ENCODE measurements at regions of chr11 and their contacts with region 1.

Region 1: DNA sequence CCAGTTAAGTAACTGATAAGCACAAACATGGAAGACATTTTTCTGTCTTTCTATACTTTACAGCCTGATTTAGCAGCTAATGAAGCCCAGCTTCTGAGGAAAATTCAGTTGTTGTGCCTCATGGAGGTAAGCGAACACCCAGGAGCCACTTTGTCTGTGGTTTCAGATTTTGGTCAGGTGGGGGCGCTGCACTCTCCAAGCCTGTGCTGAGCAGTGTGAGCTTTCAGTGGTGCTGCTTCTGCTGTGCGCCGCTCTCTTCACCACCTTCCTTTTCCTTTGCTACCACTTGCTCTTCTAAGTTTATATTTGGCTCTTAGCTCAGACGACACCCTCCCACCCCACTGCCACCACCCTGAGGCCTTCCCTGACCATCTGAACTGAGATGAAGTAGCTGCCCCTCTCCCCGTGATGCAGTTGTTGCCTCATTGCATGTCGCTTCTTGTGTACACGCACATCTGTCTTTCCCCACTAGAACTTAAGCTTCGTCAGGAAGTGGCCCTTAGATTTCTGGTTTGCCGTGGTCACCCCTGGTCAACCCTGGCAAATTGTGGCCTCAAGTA is 14.0 kb downstream of the PSMD13 start:
- DNase-seq: peak; percentile 89
- ATAC-seq: peak; percentile 98
- H3K4me3 Mint-ChIP-seq: no peak overlapping the region
- H3K27ac Mint-ChIP-seq: peak overlapping the region; percentile 93; the same call in 1 of the 2 replicates
- H3K4me1 Mint-ChIP-seq: peaks cover 6% of the 10 kb centered on the region; the same call in 1 of the 2 replicates
- H3K27me3 Mint-ChIP-seq: no peaks in the 10 kb centered on the region
- CTCF ChIP-seq: peak; percentile 92

Region 2: GRCh38 chr11:213178-213577 is 37.6 kb before region 1 on chr11:
- CTCF ChIA-PET with region 1: interaction called, 23 read pairs
- POLR2A ChIA-PET with region 1: no interaction called
- DNase-seq: no peak
- ATAC-seq: no peak
- H3K4me3 Mint-ChIP-seq: no peak overlapping the region
- H3K27ac Mint-ChIP-seq: no peak overlapping the region
- H3K4me1 Mint-ChIP-seq: 0 out of 2 replicates have a peak, but pooled peaks cover 4% of the 10 kb centered on the region
- H3K27me3 Mint-ChIP-seq: no peaks in the 10 kb centered on the region
- CTCF ChIP-seq: no peak

Region 3: DNA sequence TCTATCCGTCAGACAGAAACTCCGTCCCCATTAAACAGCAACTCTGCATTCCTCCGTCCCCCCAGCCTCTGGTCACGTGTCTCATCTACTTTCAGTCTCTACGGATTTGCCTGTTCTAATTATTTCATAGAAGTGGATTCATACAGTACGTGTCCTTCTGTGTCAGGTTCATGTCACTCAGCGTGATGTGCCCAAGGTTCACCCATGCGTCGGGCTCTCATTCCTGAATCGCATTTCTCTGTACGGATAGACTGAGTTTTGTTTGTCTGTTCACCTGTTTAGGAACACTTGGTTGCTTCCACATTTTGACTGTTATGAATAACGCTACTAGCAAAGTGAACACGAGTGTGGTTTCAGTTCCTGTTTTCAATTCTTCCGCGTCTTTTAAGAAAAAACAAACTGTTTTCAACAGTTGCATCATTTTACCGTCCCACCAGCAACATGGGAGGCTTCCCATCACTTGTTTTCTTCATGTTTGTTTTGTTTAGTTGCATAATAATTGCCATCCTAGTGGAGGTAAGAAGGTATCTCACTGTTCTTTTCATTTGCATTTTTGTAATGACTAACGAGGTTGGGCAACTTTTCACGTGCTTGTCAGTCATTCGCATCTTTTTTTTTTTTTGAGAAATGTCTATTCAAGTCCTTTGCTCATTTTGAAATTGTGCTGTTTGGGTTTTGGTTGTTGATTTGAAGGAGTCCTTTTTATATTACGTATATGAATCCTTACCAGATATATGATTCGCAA is 18.5 kb after region 1 on chr11:
- CTCF ChIA-PET with region 1: interaction called, 20 read pairs
- POLR2A ChIA-PET with region 1: interaction called, 4 read pairs
- DNase-seq: no peak
- ATAC-seq: no peak
- H3K4me3 Mint-ChIP-seq: peak overlapping the region; percentile 46
- H3K27ac Mint-ChIP-seq: peak overlapping the region; percentile 71
- H3K4me1 Mint-ChIP-seq: peaks cover 28% of the 10 kb centered on the region
- H3K27me3 Mint-ChIP-seq: no peaks in the 10 kb centered on the region; the same call in 1 of the 2 replicates
- CTCF ChIP-seq: no peak

Region 4: DNA sequence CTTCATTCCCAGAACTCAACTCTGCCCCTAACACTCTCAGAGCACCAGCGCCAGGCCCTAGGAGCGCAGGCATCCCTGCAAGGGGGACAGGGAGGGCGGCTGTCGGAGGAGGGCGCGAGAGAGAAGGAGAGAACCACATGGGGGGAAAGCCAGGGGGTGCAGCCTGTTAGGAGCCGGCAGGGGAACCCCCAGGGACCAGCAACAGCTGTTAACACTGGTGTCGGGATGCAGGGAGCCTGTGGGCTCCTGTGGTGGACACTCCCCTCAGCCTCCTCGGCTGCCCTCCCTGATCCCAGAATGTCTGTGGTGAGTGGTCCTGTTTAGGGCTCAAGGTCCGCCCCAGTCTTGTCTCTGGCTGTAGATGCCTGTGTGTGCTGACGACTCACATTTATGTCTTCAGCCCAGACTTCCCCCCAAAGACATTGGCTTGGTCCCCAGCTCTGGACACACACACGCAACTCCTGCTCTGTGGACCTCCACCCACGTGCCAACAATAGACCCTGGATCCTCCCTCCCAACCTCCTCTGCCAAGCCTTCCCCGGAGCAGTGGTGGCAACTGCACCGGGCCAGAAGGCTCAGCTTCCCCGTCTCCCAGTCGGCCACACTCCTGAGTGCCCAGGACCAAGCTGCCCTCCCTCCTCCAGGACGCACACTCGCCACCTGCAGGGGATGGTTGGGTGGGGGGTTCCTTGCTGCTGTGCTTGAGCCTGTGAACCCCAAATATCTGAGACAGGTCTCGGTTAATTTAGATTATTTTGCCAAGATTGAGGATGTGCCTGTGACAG is 49.3 kb after region 1 on chr11:
- CTCF ChIA-PET with region 1: interaction called, 36 read pairs
- POLR2A ChIA-PET with region 1: no interaction called
- DNase-seq: no peak
- ATAC-seq: peak; percentile 38
- H3K4me3 Mint-ChIP-seq: no peak overlapping the region
- H3K27ac Mint-ChIP-seq: peak overlapping the region; percentile 82; the same call in 1 of the 2 replicates
- H3K4me1 Mint-ChIP-seq: peaks cover 53% of the 10 kb centered on the region
- H3K27me3 Mint-ChIP-seq: no peaks in the 10 kb centered on the region
- CTCF ChIP-seq: no peak

Region 5: GRCh38 chr11:334264-334994 is 83.6 kb after region 1 on chr11:
- CTCF ChIA-PET with region 1: interaction called, 12 read pairs
- POLR2A ChIA-PET with region 1: no interaction called
- DNase-seq: peak; percentile 74
- ATAC-seq: peak; percentile 87
- H3K4me3 Mint-ChIP-seq: peak overlapping the region; percentile 59
- H3K27ac Mint-ChIP-seq: peak overlapping the region; percentile 100
- H3K4me1 Mint-ChIP-seq: peaks cover 49% of the 10 kb centered on the region
- H3K27me3 Mint-ChIP-seq: peaks cover 10% of the 10 kb centered on the region
- CTCF ChIP-seq: no peak

Region 6: DNA sequence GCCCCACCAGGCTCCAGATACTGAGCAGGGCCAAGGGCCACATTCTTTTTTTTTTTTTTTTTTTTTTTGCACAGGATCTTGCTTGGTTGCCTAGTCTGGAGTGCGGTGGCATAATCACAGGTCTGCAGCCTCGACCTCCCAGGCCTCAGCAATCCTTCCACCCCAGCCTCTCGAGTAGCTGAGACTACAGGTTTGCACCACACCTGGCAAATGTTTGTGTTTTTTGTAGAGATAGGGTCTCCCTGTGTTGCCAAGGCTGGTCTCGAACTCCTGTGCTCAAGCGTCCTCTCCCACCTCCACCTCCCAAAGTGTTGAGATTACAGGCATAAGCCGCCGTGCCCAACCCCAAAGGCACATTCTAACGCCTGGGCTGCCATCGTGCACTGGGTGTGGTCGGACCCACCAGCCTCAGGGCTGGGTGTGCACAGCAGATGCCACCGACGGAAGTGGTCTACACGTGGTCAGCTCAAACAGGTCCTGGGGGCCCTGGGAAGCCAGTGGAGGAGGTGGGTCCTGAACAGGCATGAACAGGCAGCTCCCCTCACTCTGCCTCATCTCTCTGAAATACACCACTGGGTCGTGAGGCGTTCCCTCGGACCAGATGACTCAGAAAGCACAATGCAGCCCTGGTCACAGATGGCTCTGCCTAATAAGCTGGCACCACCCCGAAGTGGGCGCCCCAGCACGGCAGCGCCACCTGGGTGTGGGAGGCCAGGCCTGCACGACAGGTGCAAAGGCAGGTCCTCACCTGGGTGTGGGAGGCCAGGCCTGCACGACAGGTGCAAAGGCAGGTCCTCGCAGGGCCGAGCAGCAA is 113.3 kb after region 1 on chr11:
- CTCF ChIA-PET with region 1: interaction called, 96 read pairs
- POLR2A ChIA-PET with region 1: no interaction called
- DNase-seq: peak; percentile 82
- ATAC-seq: peak; percentile 84
- H3K4me3 Mint-ChIP-seq: no peak overlapping the region
- H3K27ac Mint-ChIP-seq: no peak overlapping the region
- H3K4me1 Mint-ChIP-seq: peaks cover 17% of the 10 kb centered on the region
- H3K27me3 Mint-ChIP-seq: peaks cover 23% of the 10 kb centered on the region
- CTCF ChIP-seq: peak; percentile 44

Region 7: GRCh38 chr11:554824-555472 is 304.1 kb after region 1 on chr11:
- CTCF ChIA-PET with region 1: interaction called, 10 read pairs
- POLR2A ChIA-PET with region 1: no interaction called
- DNase-seq: peak; percentile 85
- ATAC-seq: peak; percentile 52
- H3K4me3 Mint-ChIP-seq: peak overlapping the region; percentile 57
- H3K27ac Mint-ChIP-seq: no peak overlapping the region
- H3K4me1 Mint-ChIP-seq: peaks cover 11% of the 10 kb centered on the region
- H3K27me3 Mint-ChIP-seq: peaks cover 26% of the 10 kb centered on the region
- CTCF ChIP-seq: peak; percentile 63

Region 8: GRCh38 chr11:832321-833113 is 581.7 kb after region 1 on chr11 and contains the start of gene CD151:
- CTCF ChIA-PET with region 1: no interaction called
- POLR2A ChIA-PET with region 1: no interaction called
- DNase-seq: peak; percentile 70
- ATAC-seq: peak; percentile 33
- H3K4me3 Mint-ChIP-seq: peak within 1 kb of the TSS; percentile 73
- H3K27ac Mint-ChIP-seq: no peak within 1 kb of the TSS
- H3K4me1 Mint-ChIP-seq: peaks cover 40% of the 10 kb centered on the region
- H3K27me3 Mint-ChIP-seq: peaks cover 32% of the 10 kb centered on the region
- CTCF ChIP-seq: no peak
- total RNA-seq, gene CD151: 115 to 127 TPM (median 116 TPM) in 3 replicates

Measured in WTC11 (cell line).